GM23248 (cell line): ENCODE measurements at regions of chr9 and their contacts with region 1.

Region 1: DNA sequence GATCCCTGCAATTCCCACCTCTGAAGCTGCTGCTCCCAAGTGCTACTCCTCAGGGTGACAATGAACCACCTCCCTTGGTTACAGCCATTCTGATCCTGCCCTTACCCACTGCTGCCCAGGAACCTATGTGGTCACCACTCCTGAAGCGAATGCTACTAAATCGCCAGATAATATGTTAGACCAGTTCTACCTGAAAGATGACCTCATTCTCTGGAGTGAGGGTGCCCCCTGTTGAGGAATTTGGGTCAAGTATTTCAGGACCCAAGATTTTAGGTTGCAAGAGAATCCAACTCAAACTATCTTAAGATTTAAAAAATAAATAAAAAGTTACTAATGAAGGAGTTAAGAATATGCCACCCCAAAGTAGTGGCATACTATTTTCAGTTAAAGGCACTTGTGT is 5.8 kb upstream of the SNAPC3 start:
- DNase-seq: peak; percentile 41
- H3K4me3 ChIP-seq: no peak overlapping the region
- H3K27ac ChIP-seq: no peak overlapping the region
- H3K4me1 ChIP-seq: peaks cover 3% of the 10 kb centered on the region; the same call in 1 of the 2 replicates
- H3K27me3 ChIP-seq: no peaks in the 10 kb centered on the region

Region 2: DNA sequence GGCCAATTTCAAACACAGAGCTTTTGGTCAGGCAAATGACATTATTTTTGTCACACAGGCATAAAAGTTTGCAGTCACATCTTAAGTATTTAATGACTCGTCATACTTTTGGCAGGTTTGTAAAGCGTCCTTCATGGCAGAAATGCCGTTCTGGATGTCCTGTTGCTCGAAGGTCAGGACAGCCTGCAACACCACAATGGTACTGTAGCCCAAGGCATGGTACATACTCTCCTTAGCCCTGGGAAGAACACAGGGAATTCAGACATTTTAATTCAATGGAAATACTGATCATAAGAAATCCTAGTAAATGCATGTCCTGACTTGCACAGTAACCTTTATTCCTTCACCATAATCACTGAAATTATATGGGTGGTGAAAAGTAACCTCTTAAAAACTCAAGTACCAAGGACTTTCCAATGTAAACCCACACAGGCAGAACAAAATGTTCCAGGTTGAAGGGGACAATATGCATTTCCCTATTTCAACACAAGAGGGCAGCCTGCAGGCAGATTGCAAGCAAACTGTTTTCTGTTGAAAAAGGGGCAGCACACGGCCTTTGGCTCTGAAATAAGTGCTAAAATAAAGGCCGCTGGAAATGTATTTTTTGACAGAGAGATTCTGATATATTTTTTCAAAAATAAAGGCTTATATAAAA is 205.6 kb before region 1 on chr9:
- in situ Hi-C with region 1: loop called (anchors 10 kb)
- DNase-seq: peak; percentile 73
- H3K4me3 ChIP-seq: no peak overlapping the region
- H3K27ac ChIP-seq: no peak overlapping the region
- H3K4me1 ChIP-seq: peaks cover 14% of the 10 kb centered on the region
- H3K27me3 ChIP-seq: no peaks in the 10 kb centered on the region

Region 3: GRCh38 chr9:15286161-15286821 is 130.6 kb before region 1 on chr9:
- in situ Hi-C with region 1: loop called (anchors 10 kb)
- DNase-seq: no peak
- H3K4me3 ChIP-seq: no peak overlapping the region
- H3K27ac ChIP-seq: no peak overlapping the region
- H3K4me1 ChIP-seq: no peaks in the 10 kb centered on the region
- H3K27me3 ChIP-seq: no peaks in the 10 kb centered on the region